ENCODE measurements at regions of chr12 and their contacts with region 1.

Region 1: GRCh38 chr12:38138225-38139221 is 178.1 kb upstream of the ALG10B start:
- DNase-seq: no peak

Region 2: DNA sequence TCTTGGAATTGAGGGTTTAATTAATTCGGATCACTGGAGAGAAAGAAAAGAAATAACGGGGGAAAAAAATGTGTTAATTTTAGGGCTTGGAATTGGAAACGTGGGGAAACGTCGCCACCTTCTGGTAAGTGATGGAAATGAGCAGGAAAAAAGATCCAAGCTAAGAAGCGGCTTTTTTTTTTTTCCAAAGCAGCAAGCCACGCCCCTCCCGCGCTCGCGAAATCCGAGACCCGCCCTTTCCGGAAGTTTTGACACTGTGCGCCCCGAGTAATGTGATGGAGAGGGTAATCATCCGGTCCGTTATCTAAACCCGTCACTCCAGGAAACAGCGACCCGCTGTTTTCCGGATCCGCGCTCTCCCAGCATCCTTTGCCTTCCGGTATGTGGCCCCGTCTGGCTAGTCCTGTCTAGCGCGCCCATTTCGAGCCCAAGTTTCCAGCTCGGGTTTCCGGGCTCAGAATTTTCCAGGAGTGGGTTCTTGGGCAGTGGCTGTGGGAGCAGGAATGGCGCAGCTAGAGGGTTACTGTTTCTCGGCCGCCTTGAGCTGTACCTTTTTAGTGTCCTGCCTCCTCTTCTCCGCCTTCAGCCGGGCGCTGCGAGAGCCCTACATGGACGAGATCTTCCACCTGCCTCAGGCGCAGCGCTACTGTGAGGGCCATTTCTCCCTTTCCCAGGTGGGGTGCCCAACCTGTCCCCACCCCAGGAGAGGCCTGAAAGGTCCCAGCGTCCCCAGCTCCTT is 178.0 kb after region 1 on chr12 and contains the start of gene ALG10B:
- intact Hi-C with region 1: loop called in 1 of 2 experiments (anchors 5 kb)
- DNase-seq: peak; percentile 97
- total RNA-seq, gene ALG10B: 7.5 to 8.2 TPM